RWPE1 (cell line): ENCODE measurements at regions of chr6 and their contacts with region 1.

Region 1: GRCh38 chr6:146670161-146670560 is 71.4 kb downstream of the ADGB start:
- DNase-seq: no peak
- H3K27ac ChIP-seq: no peak overlapping the region
- CTCF ChIP-seq: no peak

Region 2: GRCh38 chr6:146700078-146700686 is 30.0 kb after region 1 on chr6:
- CTCF ChIA-PET with region 1: interaction called, 12 read pairs
- POLR2A ChIA-PET with region 1: no interaction called
- DNase-seq: peak; percentile 53
- H3K27ac ChIP-seq: no peak overlapping the region
- CTCF ChIP-seq: peak; percentile 70